Mammary epithelial cell (primary cell): ENCODE measurements at regions of chr1 and their contacts with region 1.

Region 1: DNA sequence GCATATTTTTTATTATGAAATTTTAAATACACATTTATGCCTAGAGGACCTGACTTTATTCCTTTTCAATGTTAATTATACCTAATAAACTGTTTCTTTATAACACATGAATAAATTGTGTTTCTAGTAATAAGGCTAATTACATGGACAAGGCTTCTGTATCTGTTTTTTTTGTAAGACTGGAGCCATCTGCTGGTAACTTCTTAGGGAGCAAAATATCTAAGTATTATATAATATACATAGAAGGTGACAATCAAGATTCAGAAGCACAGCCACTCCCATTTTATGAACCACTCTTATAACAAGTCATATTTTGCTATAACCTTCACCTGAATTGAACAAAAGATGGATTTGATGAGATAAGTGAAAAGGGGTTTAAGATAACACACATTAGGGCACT is 84.2 kb downstream of the LBR start:
- DNase-seq: no peak
- H3K4me3 ChIP-seq: no peak overlapping the region
- H3K27ac ChIP-seq: no peak overlapping the region
- H3K4me1 ChIP-seq: peaks cover 8% of the 10 kb centered on the region
- H3K27me3 ChIP-seq: no peaks in the 10 kb centered on the region
- CTCF ChIP-seq: peak; percentile 12 to 43

Region 2: GRCh38 chr1:224503161-224504118 is 840.2 kb before region 1 on chr1:
- CTCF ChIA-PET with region 1: no interaction called
- dilution Hi-C with region 1: no loop called
- in situ Hi-C with region 1: no loop called
- intact Hi-C with region 1: loop called (anchors 10 kb)
- DNase-seq: peak; percentile 96
- H3K4me3 ChIP-seq: no peak overlapping the region
- H3K27ac ChIP-seq: peak overlapping the region; percentile 67
- H3K4me1 ChIP-seq: peaks cover 60% of the 10 kb centered on the region
- H3K27me3 ChIP-seq: no peaks in the 10 kb centered on the region
- CTCF ChIP-seq: peak in 1 of 2 donors; percentile 26

Region 3: DNA sequence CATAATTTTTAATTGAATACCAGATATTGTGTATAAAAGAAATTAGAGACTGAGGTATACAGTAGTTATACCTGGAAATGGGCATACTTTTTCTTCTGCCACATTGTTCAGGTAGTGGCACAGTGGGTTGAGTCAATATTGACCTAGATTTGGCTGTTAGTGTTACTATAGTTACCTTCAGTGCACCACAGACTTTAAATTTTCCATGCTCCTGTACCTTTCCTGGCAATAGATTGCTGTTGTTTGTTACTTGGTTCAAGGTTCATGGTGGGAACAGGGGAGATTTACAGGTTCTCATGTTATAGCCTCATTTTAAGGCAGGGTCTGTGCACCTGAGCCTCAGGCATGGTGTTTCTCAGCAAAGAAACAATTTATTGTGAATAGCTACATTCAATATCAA is 134.5 kb before region 1 on chr1:
- CTCF ChIA-PET with region 1: no interaction called
- dilution Hi-C with region 1: no loop called
- in situ Hi-C with region 1: no loop called
- intact Hi-C with region 1: no loop called
- DNase-seq: no peak
- H3K4me3 ChIP-seq: no peak overlapping the region
- H3K27ac ChIP-seq: no peak overlapping the region
- H3K4me1 ChIP-seq: no peaks in the 10 kb centered on the region
- H3K27me3 ChIP-seq: no peaks in the 10 kb centered on the region
- CTCF ChIP-seq: no peak